ENCODE measurements at regions of chr3 and their contacts with region 1.

Region 1: DNA sequence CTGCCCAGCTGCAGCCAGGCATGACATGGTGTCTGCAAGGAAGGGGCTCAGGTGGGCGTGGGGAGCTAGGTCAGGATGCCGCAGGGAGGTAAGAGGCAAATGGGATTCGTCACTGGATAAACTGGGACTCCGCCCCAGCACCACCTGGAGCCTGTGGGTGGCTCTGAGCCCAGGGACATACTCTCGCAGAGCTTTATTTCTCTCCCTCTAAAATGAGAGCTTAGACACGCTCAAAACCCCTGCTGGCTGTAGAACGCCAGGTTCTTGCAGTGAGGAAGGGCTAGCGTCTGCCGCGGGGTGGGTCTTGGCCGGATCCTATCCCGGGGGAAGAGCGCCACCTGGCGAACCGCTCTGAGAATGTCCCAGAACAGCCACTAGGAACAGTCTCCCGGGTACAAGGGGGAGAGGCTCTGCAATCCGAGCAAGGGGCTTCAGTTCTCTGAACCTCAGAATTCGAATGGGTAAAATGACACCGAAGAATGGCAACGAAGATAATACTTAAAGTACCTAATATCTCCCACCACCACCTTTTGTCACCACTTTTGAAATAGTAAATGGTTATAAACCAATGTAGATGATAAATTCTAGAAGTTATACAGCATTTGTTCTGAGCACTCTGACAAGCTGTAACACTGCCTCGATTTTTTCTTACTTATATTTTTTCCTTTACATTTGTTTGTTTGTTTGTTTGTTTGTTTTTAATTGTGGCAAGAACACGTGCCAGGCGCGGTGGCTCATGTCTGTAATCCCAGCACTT is 53.2 kb upstream of the SRGAP3 start:
- DNase-seq: peak; percentile 82
- H3K4me3 ChIP-seq: peak overlapping the region; percentile 23
- CTCF ChIP-seq: peak; percentile 91

Region 2: DNA sequence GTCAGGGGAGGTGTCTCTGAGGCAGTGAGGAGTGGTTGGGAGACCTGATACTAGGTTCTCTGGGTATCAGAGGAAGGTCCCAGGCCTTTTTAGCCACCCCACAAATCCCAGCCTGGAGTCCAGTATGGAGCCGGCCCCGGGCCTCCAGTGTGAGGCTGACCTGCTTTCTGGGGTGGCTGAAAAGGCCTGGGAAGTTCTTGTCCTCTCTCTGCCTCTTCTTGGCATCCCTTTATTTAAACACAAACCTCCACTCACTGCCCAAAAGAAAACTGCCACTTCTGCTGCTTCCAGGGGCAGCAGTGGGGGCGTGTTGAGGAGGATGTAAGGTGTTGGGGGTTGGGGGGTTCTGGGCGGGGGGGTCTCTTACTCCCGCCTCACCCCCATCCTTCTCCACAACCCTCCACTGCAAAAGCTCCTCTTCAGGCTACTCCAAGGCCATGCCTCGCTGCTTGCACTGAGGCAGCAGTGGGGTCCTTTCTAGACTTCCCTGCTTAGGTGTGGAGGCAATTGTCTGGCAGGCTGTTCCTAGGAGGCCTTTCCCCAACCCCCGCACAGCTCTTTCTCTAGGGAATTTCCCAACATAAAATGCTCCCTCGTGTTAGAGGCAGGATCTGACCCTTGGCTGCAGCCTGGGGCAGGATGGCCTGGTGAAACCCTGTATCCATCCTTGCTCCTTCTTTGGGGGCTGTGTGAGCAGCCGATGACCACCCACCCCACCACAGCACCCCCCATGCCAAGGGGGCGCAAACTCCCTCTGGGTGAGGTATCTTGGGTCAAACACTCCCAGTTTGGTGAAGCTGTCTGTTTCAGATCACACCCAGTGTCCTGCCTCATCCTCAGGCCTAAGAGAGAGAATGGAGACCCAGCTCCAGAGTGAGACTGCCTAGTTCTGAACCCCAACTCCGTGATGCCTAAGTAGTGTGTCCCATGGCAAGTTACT is 327.3 kb before region 1 on chr3:
- in situ Hi-C with region 1: loop called (anchors 5 kb)
- DNase-seq: no peak
- H3K4me3 ChIP-seq: no peak overlapping the region
- CTCF ChIP-seq: no peak

Region 3: GRCh38 chr3:9196020-9196419 is 106.6 kb before region 1 on chr3:
- in situ Hi-C with region 1: no loop called
- DNase-seq: no peak
- H3K4me3 ChIP-seq: no peak overlapping the region
- CTCF ChIP-seq: no peak

Region 4: GRCh38 chr3:9214599-9214998 is 88.0 kb before region 1 on chr3:
- in situ Hi-C with region 1: loop called (anchors 5 kb)
- DNase-seq: peak; percentile 79
- H3K4me3 ChIP-seq: no peak overlapping the region
- CTCF ChIP-seq: no peak

Region 5: GRCh38 chr3:9255976-9256375 is 46.6 kb before region 1 on chr3:
- in situ Hi-C with region 1: loop called (anchors 5 kb)
- DNase-seq: no peak
- H3K4me3 ChIP-seq: no peak overlapping the region
- CTCF ChIP-seq: no peak

Region 6: GRCh38 chr3:10459954-10460754 is 1157.6 kb after region 1 on chr3:
- in situ Hi-C with region 1: no loop called
- DNase-seq: peak; percentile 90
- H3K4me3 ChIP-seq: no peak overlapping the region
- CTCF ChIP-seq: no peak